Panc1 (cell line): ENCODE measurements at regions of chr11 and their contacts with region 1.

Region 1: GRCh38 chr11:45110562-45110961 is 35.9 kb upstream of the PRDM11 start:
- DNase-seq: no peak
- ATAC-seq: peak; percentile 80; the same call in 1 of the 2 replicates
- H3K4me3 ChIP-seq: no peak overlapping the region
- H3K27ac ChIP-seq: no peak overlapping the region
- H3K4me1 ChIP-seq: no peaks in the 10 kb centered on the region
- H3K27me3 ChIP-seq: no peaks in the 10 kb centered on the region; the same call in 1 of the 2 replicates
- CTCF ChIP-seq: peak; percentile 78

Region 2: GRCh38 chr11:45082744-45083543 is 27.6 kb before region 1 on chr11:
- CTCF ChIA-PET with region 1: no interaction called
- POLR2A ChIA-PET with region 1: interaction called, 10 read pairs
- in situ Hi-C with region 1: no loop called
- intact Hi-C with region 1: no loop called
- DNase-seq: no peak
- ATAC-seq: no peak
- H3K4me3 ChIP-seq: no peak overlapping the region
- H3K27ac ChIP-seq: no peak overlapping the region
- H3K4me1 ChIP-seq: 0 out of 2 replicates have a peak, but pooled peaks cover 3% of the 10 kb centered on the region
- H3K27me3 ChIP-seq: no peaks in the 10 kb centered on the region
- CTCF ChIP-seq: no peak

Region 3: DNA sequence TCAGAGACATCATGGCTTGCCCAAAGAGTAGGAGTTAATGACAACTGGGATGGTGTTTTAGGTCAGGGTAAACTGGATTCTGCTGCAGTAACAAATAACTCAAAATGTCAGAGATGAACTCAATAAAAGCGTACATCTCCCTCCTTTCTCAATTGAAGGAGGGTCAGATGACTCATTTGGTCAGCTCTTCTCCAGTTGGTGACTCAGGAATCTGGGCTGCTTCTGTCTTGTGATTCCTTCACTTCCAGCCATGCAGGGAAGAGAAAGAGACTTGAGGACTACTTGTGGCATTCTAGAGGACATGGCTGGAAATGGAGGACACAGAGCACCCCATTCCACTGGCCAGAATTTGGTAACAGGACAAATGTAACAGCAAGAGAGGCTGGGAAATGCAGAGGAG is 178.8 kb after region 1 on chr11:
- CTCF ChIA-PET with region 1: interaction called, 5 read pairs
- POLR2A ChIA-PET with region 1: no interaction called
- in situ Hi-C with region 1: no loop called
- intact Hi-C with region 1: loop called (anchors 2 kb)
- DNase-seq: no peak
- ATAC-seq: no peak
- H3K4me3 ChIP-seq: no peak overlapping the region
- H3K27ac ChIP-seq: no peak overlapping the region
- H3K4me1 ChIP-seq: no peaks in the 10 kb centered on the region
- H3K27me3 ChIP-seq: peaks cover 49% of the 10 kb centered on the region
- CTCF ChIP-seq: no peak

Region 4: GRCh38 chr11:45332276-45332934 is 221.8 kb after region 1 on chr11:
- CTCF ChIA-PET with region 1: interaction called, 29 read pairs
- POLR2A ChIA-PET with region 1: no interaction called
- in situ Hi-C with region 1: loop called (anchors 25 kb)
- intact Hi-C with region 1: loop called (anchors 1 kb)
- DNase-seq: peak; percentile 32
- ATAC-seq: peak; percentile 86
- H3K4me3 ChIP-seq: no peak overlapping the region
- H3K27ac ChIP-seq: no peak overlapping the region
- H3K4me1 ChIP-seq: peaks cover 3% of the 10 kb centered on the region; the same call in 1 of the 2 replicates
- H3K27me3 ChIP-seq: peaks cover 20% of the 10 kb centered on the region
- CTCF ChIP-seq: peak; percentile 86